Heart left ventricle (tissue), 16 donors: ENCODE measurements at regions of chr13 and their contacts with region 1.

Region 1: GRCh38 chr13:107211073-107211472 is 643.1 kb upstream of the ARGLU1 start:
- DNase-seq: peak in 4 of 5 donors; percentile 56 to 69 (median 63)
- ATAC-seq: peak in 3 of 4 donors; percentile 86 to 90 (median 87)
- H3K4me3 ChIP-seq: peak overlapping the region in 8 of 12 donors; percentile 21 to 37 (median 30)
- H3K27ac ChIP-seq: no peak overlapping the region
- H3K4me1 ChIP-seq: peaks cover 0 to 29% (median 14%) of the 10 kb centered on the region in 12 donors
- H3K27me3 ChIP-seq: no peaks in the 10 kb centered on the region
- CTCF ChIP-seq: peak; percentile 82 to 94 (median 88)
- POLR2A ChIP-seq: no peak

Region 2: GRCh38 chr13:106753251-106753650 is 457.8 kb before region 1 on chr13:
- intact Hi-C with region 1: no loop called
- DNase-seq: peak in 2 of 5 donors; percentile 26 to 36
- ATAC-seq: peak in 3 of 4 donors; percentile 61 to 67 (median 65)
- H3K4me3 ChIP-seq: peak overlapping the region in 1 of 12 donors; percentile 5
- H3K27ac ChIP-seq: peak overlapping the region in 9 of 12 donors; percentile 11 to 68 (median 38)
- H3K4me1 ChIP-seq: peaks cover 0 to 39% (median 10%) of the 10 kb centered on the region in 12 donors
- H3K27me3 ChIP-seq: no peaks in the 10 kb centered on the region
- CTCF ChIP-seq: no peak
- POLR2A ChIP-seq: no peak

Region 3: DNA sequence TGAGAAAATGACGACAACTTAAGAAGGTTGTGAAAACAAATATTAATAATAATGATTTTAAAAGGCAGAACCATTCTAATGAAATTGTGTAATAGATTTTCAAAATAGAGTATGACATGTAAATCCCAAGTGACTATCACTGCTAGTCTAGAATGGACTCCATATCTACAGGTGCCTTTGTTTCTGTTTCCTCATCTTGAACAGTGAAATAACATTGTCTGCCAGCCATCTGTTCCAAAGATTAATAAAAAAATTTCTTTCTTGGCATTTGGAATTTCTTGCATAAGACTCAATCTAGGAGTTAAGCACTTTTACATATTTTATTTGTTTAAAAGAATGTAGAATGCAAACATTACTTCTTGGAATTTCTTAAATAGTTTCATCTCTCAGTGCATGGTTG is 123.0 kb before region 1 on chr13:
- intact Hi-C with region 1: no loop called
- DNase-seq: no peak
- ATAC-seq: no peak
- H3K4me3 ChIP-seq: no peak overlapping the region
- H3K27ac ChIP-seq: no peak overlapping the region
- H3K4me1 ChIP-seq: peaks cover 0 to 4% (median 0%) of the 10 kb centered on the region in 12 donors
- H3K27me3 ChIP-seq: no peaks in the 10 kb centered on the region
- CTCF ChIP-seq: no peak
- POLR2A ChIP-seq: no peak

Region 4: DNA sequence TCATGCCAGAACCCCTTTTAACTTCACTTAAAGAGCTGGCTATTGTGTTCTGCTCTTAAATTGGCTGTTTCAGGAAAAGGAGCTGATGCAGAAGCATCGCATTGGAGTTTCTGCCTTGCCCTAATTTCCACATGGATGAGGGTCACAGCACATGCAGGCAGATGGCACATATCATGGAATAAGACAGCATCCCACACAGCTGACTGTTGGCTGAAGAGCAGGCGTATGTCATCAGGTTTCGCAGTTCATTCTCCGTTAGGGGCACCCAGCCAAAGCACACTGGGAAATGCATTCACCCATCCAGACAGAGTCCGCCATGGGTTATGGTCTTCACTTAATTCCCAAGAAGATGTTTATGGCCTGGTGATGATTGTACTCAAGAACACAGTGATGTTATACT is 431.8 kb after region 1 on chr13:
- intact Hi-C with region 1: loop called in 4 of 10 experiments (anchors 5 to 10 kb)
- DNase-seq: no peak
- ATAC-seq: no peak
- H3K4me3 ChIP-seq: no peak overlapping the region
- H3K27ac ChIP-seq: no peak overlapping the region
- H3K4me1 ChIP-seq: no peaks in the 10 kb centered on the region
- H3K27me3 ChIP-seq: no peaks in the 10 kb centered on the region
- CTCF ChIP-seq: no peak
- POLR2A ChIP-seq: no peak

Region 5: GRCh38 chr13:107650081-107650701 is 439.1 kb after region 1 on chr13:
- intact Hi-C with region 1: loop called (anchors 1 to 10 kb)
- DNase-seq: peak; percentile 12 to 63 (median 27)
- ATAC-seq: no peak
- H3K4me3 ChIP-seq: no peak overlapping the region
- H3K27ac ChIP-seq: no peak overlapping the region
- H3K4me1 ChIP-seq: no peaks in the 10 kb centered on the region
- H3K27me3 ChIP-seq: no peaks in the 10 kb centered on the region
- CTCF ChIP-seq: peak; percentile 48 to 74 (median 62)
- POLR2A ChIP-seq: no peak

Region 6: DNA sequence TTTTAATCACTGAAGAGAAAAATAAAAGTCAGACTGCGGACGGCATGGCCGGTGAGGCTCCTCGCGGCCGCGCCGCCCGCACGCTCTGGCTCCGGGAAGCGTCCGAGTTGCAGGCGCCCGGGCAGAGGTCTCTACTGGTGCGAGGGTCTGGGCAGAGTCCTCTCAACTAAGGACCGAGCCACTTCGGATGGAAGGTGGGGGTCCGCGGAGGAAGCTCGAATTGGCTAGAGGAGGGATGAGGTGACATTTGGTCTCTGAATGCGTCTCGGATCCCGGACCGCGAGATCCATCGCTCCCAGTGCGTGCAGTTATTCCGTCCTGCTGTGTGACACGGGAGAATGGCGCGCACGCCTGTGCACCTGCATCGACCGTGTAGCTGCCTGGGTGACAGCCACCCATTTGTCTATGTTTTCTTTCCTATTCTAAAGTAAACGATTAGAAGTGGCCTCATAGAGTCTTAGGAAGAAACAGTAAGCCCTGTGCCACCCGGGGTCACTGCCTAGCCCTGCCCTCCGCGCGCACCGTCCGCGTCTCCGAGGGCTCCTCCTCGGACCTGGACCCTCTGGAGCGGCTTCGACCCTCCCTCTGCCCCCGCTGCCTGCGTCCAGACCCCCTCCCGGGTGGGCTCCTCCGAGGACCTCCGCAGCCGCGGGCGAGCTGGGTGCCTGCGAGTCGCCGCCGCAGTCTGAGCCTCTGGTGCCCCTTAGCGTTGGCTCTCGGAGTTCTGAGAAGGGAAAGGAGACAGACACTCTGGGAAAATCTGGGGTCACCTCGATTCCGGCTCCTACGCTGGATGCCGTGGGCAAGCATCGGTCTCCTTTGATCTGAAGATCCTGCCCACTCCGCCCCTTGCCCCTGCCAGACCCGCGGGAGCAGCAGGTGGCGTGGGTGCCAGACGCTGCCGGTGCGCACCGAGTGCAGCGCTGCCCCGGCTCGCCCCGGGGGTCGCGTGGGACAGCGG is 656.9 kb after region 1 on chr13:
- intact Hi-C with region 1: loop called in 4 of 10 experiments (anchors 5 to 10 kb)
- DNase-seq: peak in 1 of 5 donors; percentile 24
- ATAC-seq: peak in 3 of 4 donors; percentile 45 to 54 (median 47)
- H3K4me3 ChIP-seq: peak overlapping the region in 11 of 12 donors; percentile 14 to 58 (median 41)
- H3K27ac ChIP-seq: no peak overlapping the region
- H3K4me1 ChIP-seq: peaks cover 0 to 28% (median 6%) of the 10 kb centered on the region in 12 donors
- H3K27me3 ChIP-seq: peaks cover 19 to 65% (median 34%) of the 10 kb centered on the region in 9 donors
- CTCF ChIP-seq: peak in 5 of 12 donors; percentile 14 to 43 (median 34)
- POLR2A ChIP-seq: no peak

Region 7: DNA sequence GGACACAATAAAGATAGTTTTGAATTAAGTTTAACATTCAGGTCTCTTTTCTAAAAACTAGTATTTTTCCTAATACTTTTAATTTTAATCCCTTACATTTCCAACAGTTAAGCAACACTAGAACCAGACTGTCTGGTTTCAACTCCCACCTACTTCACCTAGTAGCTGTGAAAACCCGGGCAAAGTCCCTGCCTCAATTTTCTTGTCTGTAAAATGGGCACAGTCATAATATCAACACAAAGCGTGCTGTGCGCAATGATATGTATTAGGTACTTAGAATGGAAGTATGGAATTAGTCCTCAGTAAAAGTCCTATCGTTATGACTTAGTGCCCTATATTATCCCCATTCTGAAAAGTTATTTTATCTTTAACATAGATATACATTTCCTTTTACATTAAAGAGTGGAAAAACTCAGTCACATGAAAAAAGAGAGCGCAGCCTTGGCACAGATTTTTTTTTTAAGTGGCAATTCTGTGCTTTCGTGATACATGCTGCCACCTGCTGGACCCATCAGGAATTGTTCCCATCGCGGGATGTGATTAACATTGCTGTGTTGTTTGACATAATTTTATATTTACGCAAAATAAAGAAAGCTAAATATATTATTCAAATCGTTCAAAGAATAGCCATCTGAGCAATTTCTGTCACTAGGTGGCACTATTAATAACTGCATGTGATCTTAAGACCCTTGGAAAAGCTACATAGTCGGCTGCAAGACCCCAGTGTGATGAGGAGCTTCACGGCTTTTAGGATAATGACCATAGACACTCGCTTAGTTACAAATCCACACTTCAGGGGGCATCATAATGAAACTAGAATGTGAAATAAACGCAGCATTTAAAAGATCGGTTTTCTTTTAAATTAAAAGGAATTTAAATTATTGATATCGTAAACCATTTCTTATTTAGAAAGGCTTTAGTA is 944.4 kb after region 1 on chr13:
- intact Hi-C with region 1: loop called (anchors 1 to 5 kb)
- DNase-seq: peak in 4 of 5 donors; percentile 22 to 41 (median 33)
- ATAC-seq: peak in 1 of 4 donors; percentile 41
- H3K4me3 ChIP-seq: no peak overlapping the region
- H3K27ac ChIP-seq: no peak overlapping the region
- H3K4me1 ChIP-seq: no peaks in the 10 kb centered on the region
- H3K27me3 ChIP-seq: no peaks in the 10 kb centered on the region
- CTCF ChIP-seq: peak; percentile 68 to 92 (median 84)
- POLR2A ChIP-seq: no peak